Panc1 (cell line): ENCODE measurements at regions of chr12 and their contacts with region 1.

Region 1: GRCh38 chr12:78009031-78009430 is 178.3 kb downstream of the NAV3 start:
- DNase-seq: no peak
- ATAC-seq: no peak
- H3K4me3 ChIP-seq: no peak overlapping the region
- H3K27ac ChIP-seq: no peak overlapping the region
- H3K4me1 ChIP-seq: no peaks in the 10 kb centered on the region
- H3K27me3 ChIP-seq: no peaks in the 10 kb centered on the region
- CTCF ChIP-seq: no peak

Region 2: GRCh38 chr12:77947326-77947725 is 61.7 kb before region 1 on chr12:
- CTCF ChIA-PET with region 1: no interaction called
- POLR2A ChIA-PET with region 1: no interaction called
- in situ Hi-C with region 1: no loop called
- intact Hi-C with region 1: no loop called
- DNase-seq: no peak
- ATAC-seq: no peak
- H3K4me3 ChIP-seq: no peak overlapping the region
- H3K27ac ChIP-seq: no peak overlapping the region
- H3K4me1 ChIP-seq: no peaks in the 10 kb centered on the region
- H3K27me3 ChIP-seq: no peaks in the 10 kb centered on the region
- CTCF ChIP-seq: no peak

Region 3: GRCh38 chr12:77974643-77975042 is 34.4 kb before region 1 on chr12:
- CTCF ChIA-PET with region 1: interaction called, 15 read pairs
- POLR2A ChIA-PET with region 1: no interaction called
- in situ Hi-C with region 1: no loop called
- intact Hi-C with region 1: no loop called
- DNase-seq: no peak
- ATAC-seq: no peak
- H3K4me3 ChIP-seq: no peak overlapping the region
- H3K27ac ChIP-seq: no peak overlapping the region
- H3K4me1 ChIP-seq: no peaks in the 10 kb centered on the region
- H3K27me3 ChIP-seq: no peaks in the 10 kb centered on the region
- CTCF ChIP-seq: no peak

Region 4: GRCh38 chr12:78120866-78121560 is 112.0 kb after region 1 on chr12:
- CTCF ChIA-PET with region 1: no interaction called
- POLR2A ChIA-PET with region 1: no interaction called
- in situ Hi-C with region 1: no loop called
- intact Hi-C with region 1: no loop called
- DNase-seq: no peak
- ATAC-seq: no peak
- H3K4me3 ChIP-seq: no peak overlapping the region
- H3K27ac ChIP-seq: no peak overlapping the region
- H3K4me1 ChIP-seq: no peaks in the 10 kb centered on the region
- H3K27me3 ChIP-seq: no peaks in the 10 kb centered on the region
- CTCF ChIP-seq: peak; percentile 36; the same call in 1 of the 2 replicates

Region 5: GRCh38 chr12:78229591-78230101 is 220.6 kb after region 1 on chr12:
- CTCF ChIA-PET with region 1: interaction called, 13 read pairs
- POLR2A ChIA-PET with region 1: no interaction called
- in situ Hi-C with region 1: no loop called
- intact Hi-C with region 1: no loop called
- DNase-seq: peak; percentile 30
- ATAC-seq: no peak
- H3K4me3 ChIP-seq: no peak overlapping the region
- H3K27ac ChIP-seq: no peak overlapping the region
- H3K4me1 ChIP-seq: no peaks in the 10 kb centered on the region
- H3K27me3 ChIP-seq: no peaks in the 10 kb centered on the region
- CTCF ChIP-seq: peak; percentile 55; the same call in 1 of the 2 replicates

Region 6: DNA sequence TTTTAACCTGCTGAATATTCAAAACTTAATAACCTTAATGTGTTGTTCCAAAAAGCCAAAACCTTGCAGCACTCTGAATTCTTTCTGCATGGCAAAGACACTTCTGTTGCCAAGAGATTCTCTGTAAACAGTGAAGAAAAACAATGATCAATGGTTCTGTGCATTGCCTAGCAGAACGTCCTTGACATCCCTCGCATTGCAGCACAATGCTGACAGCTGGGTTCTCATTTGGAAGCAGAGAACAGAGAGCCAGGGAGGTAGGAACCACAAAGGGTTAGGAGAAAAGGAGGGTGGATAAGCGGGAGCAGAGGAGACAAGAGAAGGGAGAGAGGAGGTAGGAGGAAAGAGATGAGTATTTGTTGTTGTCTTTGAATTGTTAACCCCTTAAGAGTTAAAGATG is 322.7 kb after region 1 on chr12:
- CTCF ChIA-PET with region 1: interaction called, 10 read pairs
- POLR2A ChIA-PET with region 1: no interaction called
- in situ Hi-C with region 1: no loop called
- intact Hi-C with region 1: no loop called
- DNase-seq: no peak
- ATAC-seq: no peak
- H3K4me3 ChIP-seq: no peak overlapping the region
- H3K27ac ChIP-seq: no peak overlapping the region
- H3K4me1 ChIP-seq: no peaks in the 10 kb centered on the region
- H3K27me3 ChIP-seq: no peaks in the 10 kb centered on the region
- CTCF ChIP-seq: no peak